T-cell (primary cell): ENCODE measurements at regions of chr2 and their contacts with region 1.

Region 1: GRCh38 chr2:170973492-170974303 is 44.6 kb downstream of the GORASP2 start:
- DNase-seq: peak; percentile 71 to 95 (median 84)
- ATAC-seq: peak; percentile 94 to 99 (median 96)
- H3K4me3 ChIP-seq: peak overlapping the region; percentile 69 to 91
- H3K4me3 Mint-ChIP-seq: peak overlapping the region; percentile 64 to 79 (median 78)
- H3K27ac ChIP-seq: no peak overlapping the region
- H3K27ac Mint-ChIP-seq: peak overlapping the region; percentile 53 to 75
- H3K4me1 ChIP-seq: peaks cover 9 to 20% of the 10 kb centered on the region in 2 experiments
- H3K4me1 Mint-ChIP-seq: peaks cover 10 to 11% (median 10%) of the 10 kb centered on the region in 3 donors
- H3K27me3 ChIP-seq: no peaks in the 10 kb centered on the region
- H3K27me3 Mint-ChIP-seq: no peaks in the 10 kb centered on the region

Region 2: DNA sequence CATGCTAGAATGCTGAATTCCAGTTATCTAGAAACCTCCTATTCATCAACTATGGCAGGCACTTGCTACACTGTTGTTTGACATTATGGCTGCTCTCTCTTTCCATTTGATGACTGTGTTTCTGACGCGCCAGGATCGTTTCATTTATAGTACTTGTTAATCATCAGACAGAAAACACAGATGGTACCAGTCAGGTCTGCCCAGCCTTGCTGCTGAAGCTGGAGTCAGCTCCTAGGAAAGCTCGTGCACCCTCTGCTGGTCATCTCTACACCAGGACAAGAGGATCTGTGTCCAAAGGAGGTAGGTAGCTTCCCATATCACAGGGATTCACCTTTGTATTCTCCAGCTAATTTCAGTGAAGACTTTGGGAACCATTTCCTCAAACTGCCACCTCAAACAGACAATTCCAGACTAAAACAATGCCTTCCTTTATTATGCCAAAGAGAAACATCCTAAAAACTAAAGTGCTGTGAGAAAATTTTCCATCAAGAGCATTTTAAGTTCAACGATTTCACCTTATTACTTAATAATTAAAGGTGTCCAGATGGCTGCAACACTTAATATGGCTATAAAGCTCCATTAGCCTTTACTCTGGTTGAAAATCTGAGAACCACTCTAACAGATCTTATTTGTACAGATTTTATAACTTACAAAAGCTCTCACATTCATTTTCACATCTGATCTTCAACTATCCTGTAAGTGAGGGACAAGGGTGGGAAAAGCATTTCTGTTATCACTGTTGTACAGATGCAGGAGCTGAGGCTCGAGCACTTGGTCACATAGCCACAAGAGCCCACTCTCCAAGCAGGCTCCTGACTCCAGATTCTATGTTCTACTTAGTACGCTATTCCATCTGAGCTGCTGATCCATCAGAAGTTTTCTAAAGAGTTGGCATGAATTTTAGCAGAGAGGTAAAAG is 442.6 kb after region 1 on chr2:
- CTCF ChIA-PET with region 1: interaction called, 14 to 26 read pairs
- POLR2A ChIA-PET with region 1: no interaction called
- DNase-seq: peak; percentile 48 to 86 (median 72)
- ATAC-seq: peak; percentile 97 to 99 (median 98)
- H3K4me3 ChIP-seq: no peak overlapping the region
- H3K4me3 Mint-ChIP-seq: no peak overlapping the region
- H3K27ac ChIP-seq: peak overlapping the region; percentile 49
- H3K27ac Mint-ChIP-seq: peak overlapping the region in 1 of 2 donors; percentile 25
- H3K4me1 ChIP-seq: peaks cover 0 to 5% of the 10 kb centered on the region in 2 experiments
- H3K4me1 Mint-ChIP-seq: peaks cover 10 to 16% (median 13%) of the 10 kb centered on the region in 3 donors
- H3K27me3 ChIP-seq: no peaks in the 10 kb centered on the region
- H3K27me3 Mint-ChIP-seq: no peaks in the 10 kb centered on the region